Psoas muscle (tissue), 8 donors: ENCODE measurements at regions of chr17 and their contacts with region 1.

Region 1: GRCh38 chr17:45894022-45894784 is at the start of gene MAPT:
- DNase-seq: peak; percentile 93 to 97
- ATAC-seq: peak; percentile 85 to 94 (median 90)
- H3K4me3 ChIP-seq: peak within 1 kb of the TSS; percentile 97
- H3K27ac ChIP-seq: peak within 1 kb of the TSS; percentile 88
- H3K4me1 ChIP-seq: peaks cover 23% of the 10 kb centered on the region
- H3K27me3 ChIP-seq: no peaks in the 10 kb centered on the region
- CTCF ChIP-seq: peak; percentile 98
- total RNA-seq, gene MAPT: 104 to 253 (median 170) TPM

Region 2: GRCh38 chr17:45218895-45219661 is 675.1 kb before region 1 on chr17:
- intact Hi-C with region 1: no loop called
- DNase-seq: peak; percentile 90 to 91
- ATAC-seq: peak; percentile 88 to 93 (median 93)
- H3K4me3 ChIP-seq: no peak overlapping the region
- H3K27ac ChIP-seq: no peak overlapping the region
- H3K4me1 ChIP-seq: peaks cover 3% of the 10 kb centered on the region
- H3K27me3 ChIP-seq: peaks cover 0 to 13% (median 8%) of the 10 kb centered on the region in 3 donors
- CTCF ChIP-seq: peak; percentile 98

Region 3: DNA sequence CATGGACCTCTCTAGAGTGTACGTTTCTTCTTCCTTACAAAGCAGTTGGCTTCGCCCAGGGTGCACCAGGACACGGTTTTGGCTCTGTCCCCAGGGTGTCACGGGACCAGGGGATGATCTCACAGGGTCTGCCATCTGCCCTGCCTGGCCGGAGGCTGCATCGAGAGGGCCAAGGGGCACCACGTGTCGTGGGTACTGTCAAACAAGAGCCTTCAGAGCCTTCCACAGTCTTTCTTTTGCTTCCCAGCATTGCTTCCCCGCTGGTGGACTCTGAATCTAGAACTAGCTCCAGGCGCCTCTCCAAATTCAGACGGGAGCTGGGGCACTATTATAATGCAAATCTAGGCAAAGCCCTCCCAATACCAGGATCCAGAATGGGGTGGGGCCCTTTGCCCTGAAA is 48.1 kb after region 1 on chr17:
- intact Hi-C with region 1: loop called (anchors 2 to 10 kb)
- DNase-seq: peak; percentile 87 to 95
- ATAC-seq: peak; percentile 98 to 99 (median 99)
- H3K4me3 ChIP-seq: peak overlapping the region; percentile 9
- H3K27ac ChIP-seq: peak overlapping the region; percentile 82
- H3K4me1 ChIP-seq: peaks cover 52% of the 10 kb centered on the region
- H3K27me3 ChIP-seq: no peaks in the 10 kb centered on the region
- CTCF ChIP-seq: no peak

Region 4: DNA sequence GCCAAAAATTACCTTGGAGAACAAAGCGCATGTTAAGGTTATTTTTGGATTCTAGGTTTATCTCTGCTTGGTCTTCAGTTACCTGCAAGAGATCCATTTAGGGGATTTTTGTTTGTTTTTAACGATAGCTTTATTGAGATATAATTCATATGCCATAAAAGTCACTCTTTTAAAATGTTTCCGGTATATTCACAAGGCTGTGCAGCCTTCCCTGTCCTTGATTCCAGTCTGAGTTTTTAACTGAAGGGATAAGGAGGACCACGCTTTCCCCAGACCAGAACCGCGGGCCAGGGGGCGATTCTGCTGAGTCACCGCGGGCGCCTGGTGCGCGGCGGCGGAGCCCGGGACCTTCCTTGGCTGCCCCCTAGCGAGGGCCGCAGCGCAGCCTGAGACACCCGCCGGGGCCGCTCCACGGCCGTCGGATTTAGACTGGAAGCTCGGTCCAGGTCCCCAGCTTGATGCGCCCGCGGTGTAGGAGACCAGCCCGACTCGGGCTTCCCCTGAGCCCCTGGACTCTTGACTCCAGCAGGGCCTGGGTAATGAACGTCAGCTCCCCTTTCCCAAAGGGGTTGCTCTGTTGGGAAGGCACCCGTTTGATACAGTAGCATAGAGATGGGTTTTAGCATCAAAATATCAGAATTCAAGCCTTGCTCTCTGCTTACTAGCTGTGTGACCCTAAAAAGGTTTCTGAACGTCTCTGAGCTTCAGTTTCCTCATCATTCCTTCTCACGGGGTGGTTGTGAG is 54.9 kb after region 1 on chr17:
- intact Hi-C with region 1: loop called in 1 of 2 experiments (anchors 10 kb)
- DNase-seq: peak; percentile 86 to 90
- ATAC-seq: peak; percentile 90 to 95 (median 93)
- H3K4me3 ChIP-seq: peak overlapping the region; percentile 53
- H3K27ac ChIP-seq: peak overlapping the region; percentile 78
- H3K4me1 ChIP-seq: peaks cover 23% of the 10 kb centered on the region
- H3K27me3 ChIP-seq: no peaks in the 10 kb centered on the region
- CTCF ChIP-seq: peak; percentile 82